ENCODE measurements at regions of chr12 and their contacts with region 1.

Region 1: GRCh38 chr12:54379401-54380201 is 4.9 kb downstream of the ZNF385A start:
- DNase-seq: no peak
- H3K4me3 ChIP-seq: peak overlapping the region; percentile 43
- H3K27me3 ChIP-seq: no peaks in the 10 kb centered on the region
- CTCF ChIP-seq: peak; percentile 100

Region 2: DNA sequence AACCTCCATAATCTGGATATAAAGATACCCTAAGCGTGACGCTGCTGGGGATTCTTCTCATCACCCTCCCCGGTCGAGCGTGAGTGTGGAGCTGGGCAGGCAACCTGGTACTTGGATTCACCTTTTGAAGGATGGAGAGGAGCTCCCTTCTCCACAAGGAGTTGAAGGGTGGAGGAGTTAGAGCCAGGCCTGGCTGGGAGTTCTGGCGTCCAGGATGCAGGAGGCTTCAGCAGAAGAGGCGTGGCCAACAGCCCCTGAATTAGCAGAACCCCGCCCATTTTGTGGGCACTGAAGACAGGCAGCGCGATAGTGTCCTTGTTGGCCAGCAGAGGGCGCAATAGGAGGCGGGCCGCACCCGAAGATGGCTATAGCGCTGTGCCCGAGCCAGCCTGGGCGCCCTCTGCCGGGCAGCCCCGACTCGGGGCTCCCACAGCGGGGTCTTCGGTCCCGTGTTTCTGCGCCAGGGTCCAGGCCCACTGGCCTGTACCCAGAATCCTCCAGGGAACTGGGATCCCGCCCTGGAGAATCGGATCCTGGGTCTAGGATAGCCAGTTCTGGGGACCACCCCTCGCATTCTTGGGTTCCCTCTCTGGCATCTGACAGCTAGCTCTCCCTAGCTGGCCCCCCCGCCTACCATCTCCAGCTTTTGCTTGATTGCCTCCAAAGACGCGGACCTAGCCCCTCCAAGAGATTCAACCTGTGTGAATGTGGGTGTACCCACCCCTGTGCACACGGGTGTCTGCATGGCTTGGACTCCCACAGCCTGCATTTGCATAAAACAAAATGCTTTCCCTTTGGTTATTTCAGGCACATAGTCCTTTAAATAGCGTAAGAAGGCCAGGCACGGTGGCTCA is 164.8 kb before region 1 on chr12:
- CTCF ChIA-PET with region 1: interaction called, 37 read pairs
- POLR2A ChIA-PET with region 1: no interaction called
- DNase-seq: peak; percentile 29
- H3K4me3 ChIP-seq: 0 out of 2 replicates have a peak overlapping the region, but pooled peaks have one; percentile 7
- H3K27me3 ChIP-seq: peaks cover 3% of the 10 kb centered on the region
- CTCF ChIP-seq: peak; percentile 100

Region 3: GRCh38 chr12:54300732-54301427 is 78.7 kb before region 1 on chr12 and contains the start of gene NFE2:
- CTCF ChIA-PET with region 1: interaction called, 17 read pairs
- POLR2A ChIA-PET with region 1: no interaction called
- DNase-seq: no peak
- H3K4me3 ChIP-seq: peak within 1 kb of the TSS; percentile 25
- H3K27me3 ChIP-seq: peaks cover 13% of the 10 kb centered on the region
- CTCF ChIP-seq: peak; percentile 32; the same call in 1 of the 2 replicates
- polyA plus RNA-seq, gene NFE2: 0.89 and 1.0 TPM in 2 replicates

Region 4: DNA sequence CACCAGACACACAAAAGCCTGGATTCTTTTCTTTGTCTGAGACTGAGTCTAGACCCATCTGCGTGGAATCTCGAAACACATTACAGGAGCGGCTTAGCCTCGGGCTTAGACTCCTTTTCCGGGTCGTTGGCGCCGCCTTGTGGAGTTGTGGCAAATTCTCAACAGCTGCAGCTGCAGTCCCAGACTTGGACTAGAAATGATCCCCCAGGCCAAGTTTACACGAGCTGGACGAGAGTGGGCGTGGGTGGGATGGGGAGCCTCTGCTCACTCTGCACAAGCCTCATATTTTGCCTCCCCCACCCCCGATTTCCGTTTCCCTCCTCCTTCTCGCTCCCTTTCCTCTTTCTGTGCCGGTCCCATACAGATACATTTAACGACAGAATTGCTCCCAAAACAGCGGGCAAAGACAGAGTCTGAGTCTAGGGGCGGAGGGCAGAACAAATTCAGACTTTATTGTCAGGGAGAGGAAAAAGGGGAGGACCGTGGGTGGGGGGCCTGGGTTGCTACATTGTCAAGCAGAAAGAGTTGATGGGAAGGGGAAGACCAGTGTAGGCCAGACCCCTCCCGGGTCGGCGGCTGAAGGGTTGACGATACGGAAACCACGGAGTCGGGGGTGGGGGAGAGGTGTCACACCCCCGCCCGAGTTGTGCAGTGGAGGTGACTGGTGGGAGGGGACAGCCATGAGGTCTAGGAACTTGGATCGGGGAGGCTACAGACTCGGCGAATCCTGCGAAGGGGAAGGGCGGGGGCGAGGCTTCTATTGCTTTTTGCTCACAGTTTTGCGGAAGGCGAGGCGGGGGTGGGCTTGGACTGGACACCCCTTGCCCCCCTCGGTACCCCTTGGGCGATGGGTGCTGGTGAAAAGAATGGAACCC is 10.7 kb before region 1 on chr12:
- CTCF ChIA-PET with region 1: interaction called, 72 read pairs
- POLR2A ChIA-PET with region 1: interaction called, 9 read pairs
- DNase-seq: peak; percentile 39
- H3K4me3 ChIP-seq: no peak overlapping the region
- H3K27me3 ChIP-seq: no peaks in the 10 kb centered on the region
- CTCF ChIP-seq: peak; percentile 93

Region 5: DNA sequence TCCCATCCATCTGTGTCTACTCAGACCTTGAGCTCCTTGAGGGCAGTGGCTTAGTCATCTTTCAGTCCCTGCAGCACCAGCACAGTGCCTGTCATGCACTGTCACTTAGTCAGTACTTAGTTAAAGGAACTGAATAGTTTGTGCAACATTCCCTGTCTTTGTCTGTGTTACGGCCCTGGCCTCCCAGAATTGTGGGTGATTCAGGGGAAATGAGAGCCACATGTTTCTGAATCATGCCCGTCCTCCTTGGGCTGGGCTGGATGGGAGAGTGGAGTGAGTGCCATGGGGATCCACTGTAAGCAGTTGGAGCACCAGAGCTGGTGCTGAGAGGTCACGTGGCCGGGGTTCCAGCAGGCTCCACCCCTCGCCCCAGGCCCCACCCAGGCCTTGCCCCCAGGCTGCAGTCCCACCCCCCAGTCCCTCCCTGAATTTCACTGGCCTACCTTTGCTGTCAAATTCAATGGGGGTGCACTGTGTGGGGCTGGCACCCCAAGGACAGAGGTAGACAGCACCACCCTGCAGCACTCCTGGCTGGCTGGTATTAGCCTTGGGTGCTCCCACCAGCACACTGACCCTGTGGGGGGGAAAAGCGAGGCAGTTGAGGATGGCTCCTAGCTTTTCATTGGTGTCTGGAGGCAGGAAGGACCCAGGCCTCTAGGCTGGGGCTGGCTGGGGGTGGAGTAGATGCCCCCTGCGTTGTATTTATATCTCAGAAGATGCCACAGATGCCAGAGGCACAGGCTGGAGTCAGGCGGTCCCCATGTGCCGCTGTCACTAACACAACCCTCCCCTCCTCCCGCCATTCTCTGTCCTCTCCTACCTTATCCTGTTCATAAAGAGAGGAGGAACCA is 32.0 kb after region 1 on chr12:
- CTCF ChIA-PET with region 1: interaction called, 22 read pairs
- POLR2A ChIA-PET with region 1: no interaction called
- DNase-seq: peak; percentile 98
- H3K4me3 ChIP-seq: no peak overlapping the region
- H3K27me3 ChIP-seq: no peaks in the 10 kb centered on the region
- CTCF ChIP-seq: no peak

Region 6: GRCh38 chr12:54439521-54440255 is 60.1 kb after region 1 on chr12:
- CTCF ChIA-PET with region 1: interaction called, 42 read pairs
- POLR2A ChIA-PET with region 1: no interaction called
- DNase-seq: peak; percentile 27
- H3K4me3 ChIP-seq: no peak overlapping the region
- H3K27me3 ChIP-seq: peaks cover 4% of the 10 kb centered on the region; the same call in 1 of the 2 replicates
- CTCF ChIP-seq: peak; percentile 79

Measured in BJ (cell line).